Ascending aorta (tissue), 2 donors: ENCODE measurements at regions of chr3 and their contacts with region 1.

Region 1: DNA sequence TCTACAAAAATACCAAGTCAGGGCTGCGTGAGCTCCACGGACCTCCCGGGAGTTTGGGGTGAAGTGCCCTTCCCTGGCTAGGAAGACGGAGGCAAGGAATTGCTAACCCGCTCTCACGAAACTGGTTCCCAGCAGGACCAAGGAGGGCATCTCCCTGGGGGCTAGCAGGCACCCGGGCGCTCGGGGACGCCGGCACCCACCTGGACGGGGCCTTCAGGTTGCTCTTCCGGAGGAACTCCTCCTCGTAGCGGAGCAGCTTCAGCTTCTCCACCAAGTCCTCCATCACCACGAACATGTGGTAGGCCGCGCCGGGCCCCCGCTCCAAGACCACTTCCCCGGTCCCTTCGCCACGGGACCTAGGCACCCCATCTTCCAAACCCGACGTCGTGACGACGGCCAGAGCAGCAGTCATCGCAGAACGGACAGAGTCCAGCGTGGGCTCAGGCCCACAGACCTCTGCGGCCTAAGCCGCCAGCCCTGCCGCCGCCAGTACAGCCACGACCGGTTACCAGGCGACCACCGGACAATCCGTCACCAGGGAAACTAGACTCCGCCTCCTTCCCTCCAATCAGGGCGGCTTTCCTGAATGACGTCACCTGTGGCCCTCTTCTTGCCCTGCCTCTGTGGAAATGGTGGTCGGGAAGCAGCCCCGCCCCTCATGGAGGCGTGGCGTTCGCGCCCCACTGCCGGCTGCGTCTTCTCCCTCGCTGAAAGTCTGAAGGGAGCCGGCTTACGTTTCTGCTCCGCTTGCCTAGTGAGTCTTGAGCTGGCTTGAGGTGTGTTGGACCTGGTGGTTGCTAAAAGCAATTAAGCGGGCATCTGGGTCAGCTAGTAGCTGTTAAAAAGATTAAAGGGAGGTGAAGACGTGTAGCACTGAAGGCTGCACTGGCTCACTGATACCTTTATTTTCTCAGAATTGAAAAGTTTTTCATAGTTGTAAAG is at the start of gene IFT57:
- DNase-seq: peak; percentile 95 to 99
- H3K4me3 ChIP-seq: peak within 1 kb of the TSS; percentile 67 to 79
- H3K27ac ChIP-seq: peak within 1 kb of the TSS; percentile 68 to 69
- H3K4me1 ChIP-seq: peaks cover 0 to 19% of the 10 kb centered on the region in 2 donors
- H3K27me3 ChIP-seq: no peaks in the 10 kb centered on the region
- CTCF ChIP-seq: no peak
- total RNA-seq, gene IFT57: 27.7 TPM

Region 2: DNA sequence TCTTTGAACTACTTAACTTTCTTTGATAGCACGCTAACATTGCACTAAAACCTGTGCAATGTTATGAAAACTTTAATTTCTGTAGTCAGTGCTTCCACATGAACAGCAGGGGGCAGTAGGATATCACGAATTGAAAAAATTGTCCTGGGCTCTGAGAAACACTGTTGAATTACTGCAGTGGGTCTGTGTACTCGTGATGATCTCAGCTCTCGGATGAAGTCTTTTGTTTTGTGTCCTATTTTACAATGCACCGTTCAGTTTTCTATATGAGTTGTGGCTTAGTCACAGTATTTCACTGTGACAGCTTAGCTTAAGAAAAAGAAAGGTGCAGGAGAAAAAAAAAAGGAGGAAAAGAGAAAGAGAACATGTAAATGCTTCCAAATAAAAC is 986.3 kb before region 1 on chr3:
- intact Hi-C with region 1: loop called (anchors 10 kb)
- DNase-seq: no peak
- H3K4me3 ChIP-seq: peak overlapping the region; percentile 49 to 70
- H3K27ac ChIP-seq: peak overlapping the region; percentile 15 to 58
- H3K4me1 ChIP-seq: peaks cover 0 to 6% of the 10 kb centered on the region in 2 donors
- H3K27me3 ChIP-seq: no peaks in the 10 kb centered on the region
- CTCF ChIP-seq: peak; percentile 66 to 88 (median 85)

Region 3: DNA sequence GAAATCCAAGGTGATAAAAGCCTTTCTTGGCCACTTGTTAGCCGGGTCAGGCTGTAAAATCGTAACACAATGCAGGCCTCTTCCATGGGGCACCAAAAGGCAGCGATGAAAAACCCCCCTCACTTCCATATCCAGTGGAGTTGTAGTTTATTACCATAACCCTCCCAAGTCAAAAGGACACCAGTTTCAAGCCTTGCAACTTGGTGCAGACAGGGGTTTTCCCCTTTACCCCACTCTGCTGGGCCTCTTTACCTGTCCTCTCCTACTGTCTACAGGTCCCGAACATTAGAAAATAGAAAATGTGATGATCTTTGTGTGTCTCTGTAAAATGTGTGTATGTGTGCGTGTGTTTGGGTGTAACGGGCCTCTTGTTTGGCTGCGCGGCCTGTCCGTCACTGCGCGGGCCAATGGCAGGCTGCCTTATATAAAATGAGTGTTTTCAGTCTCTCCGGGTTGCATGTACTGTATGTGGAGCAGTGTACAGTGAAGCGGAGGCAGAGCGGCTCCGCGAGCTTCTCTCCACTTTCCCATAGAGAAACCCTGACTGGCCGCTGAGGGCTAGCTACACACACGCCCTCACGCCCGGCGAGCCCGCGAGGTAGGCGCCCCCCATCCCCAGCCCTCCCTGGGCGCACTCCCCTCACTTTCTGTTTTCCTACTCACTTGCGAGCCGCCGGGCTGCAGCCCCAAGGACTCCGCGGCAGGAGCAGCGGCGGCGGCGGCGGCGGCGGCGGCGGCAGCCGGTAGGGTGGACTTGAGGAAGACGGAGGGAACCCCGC is 699.5 kb before region 1 on chr3 and contains the start of gene BBX:
- intact Hi-C with region 1: loop called (anchors 5 kb)
- DNase-seq: peak; percentile 85 to 98
- H3K4me3 ChIP-seq: peak within 1 kb of the TSS; percentile 94 to 95
- H3K27ac ChIP-seq: peak within 1 kb of the TSS; percentile 96 to 98
- H3K4me1 ChIP-seq: peaks cover 0 to 11% of the 10 kb centered on the region in 2 donors
- H3K27me3 ChIP-seq: no peaks in the 10 kb centered on the region
- CTCF ChIP-seq: no peak
- total RNA-seq, gene BBX: 18.0 TPM

Region 4: DNA sequence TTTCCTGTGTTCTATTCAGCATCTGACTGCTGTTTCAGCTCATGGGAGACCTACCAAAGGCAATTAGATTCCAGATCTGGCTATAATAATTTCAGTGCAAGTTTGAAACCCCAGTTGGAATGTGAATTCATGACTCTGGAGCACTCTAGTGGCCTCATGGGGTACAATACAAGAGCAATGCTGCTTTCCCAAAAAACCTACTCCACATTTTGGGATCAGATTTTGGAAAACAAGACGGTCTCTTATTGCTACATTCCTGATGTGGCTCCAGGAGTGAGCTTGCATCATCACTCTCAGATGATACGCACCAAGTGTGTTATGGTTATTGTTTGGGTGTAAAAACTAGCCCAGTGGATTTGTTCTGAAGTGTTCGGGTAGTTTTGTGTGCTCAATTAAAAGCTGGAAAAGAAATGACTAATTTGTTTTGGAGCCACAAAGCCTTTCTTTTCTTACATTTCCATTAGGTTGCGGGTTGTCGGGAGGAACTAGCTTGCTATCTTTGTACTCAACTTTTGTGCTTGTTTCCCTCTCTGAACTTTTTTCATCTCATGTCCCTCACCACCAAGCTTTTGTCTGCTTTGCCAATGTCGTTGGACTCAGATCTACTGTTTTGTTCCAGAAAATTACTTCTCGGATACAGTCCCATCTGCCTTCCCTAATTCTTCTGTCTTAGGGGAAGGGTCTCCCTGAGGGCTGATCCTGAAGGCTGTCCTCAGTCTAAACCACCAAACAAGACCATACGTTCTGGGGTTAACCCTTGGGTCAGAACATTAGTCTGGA is 427.3 kb before region 1 on chr3:
- intact Hi-C with region 1: loop called (anchors 5 kb)
- DNase-seq: no peak
- H3K4me3 ChIP-seq: no peak overlapping the region
- H3K27ac ChIP-seq: peak overlapping the region; percentile 15 to 67
- H3K4me1 ChIP-seq: peaks cover 6 to 41% of the 10 kb centered on the region in 2 donors
- H3K27me3 ChIP-seq: no peaks in the 10 kb centered on the region
- CTCF ChIP-seq: peak in 2 of 3 experiments; percentile 30 to 36

Region 5: GRCh38 chr3:107956991-107957900 is 264.9 kb before region 1 on chr3:
- intact Hi-C with region 1: loop called (anchors 5 kb)
- DNase-seq: peak; percentile 26 to 93
- H3K4me3 ChIP-seq: peak overlapping the region; percentile 14 to 57
- H3K27ac ChIP-seq: peak overlapping the region; percentile 80 to 83
- H3K4me1 ChIP-seq: peaks cover 9 to 11% of the 10 kb centered on the region in 2 donors
- H3K27me3 ChIP-seq: no peaks in the 10 kb centered on the region
- CTCF ChIP-seq: no peak

Region 6: GRCh38 chr3:108589146-108589997 is 367.2 kb after region 1 on chr3 and contains the starts of genes CIP2A and DZIP3:
- intact Hi-C with region 1: loop called (anchors 10 kb)
- DNase-seq: peak; percentile 20 to 88
- H3K4me3 ChIP-seq: peak within 1 kb of the TSS; percentile 70 to 71
- H3K27ac ChIP-seq: peak within 1 kb of the TSS; percentile 93
- H3K4me1 ChIP-seq: peaks cover 0 to 2% of the 10 kb centered on the region in 2 donors
- H3K27me3 ChIP-seq: no peaks in the 10 kb centered on the region
- CTCF ChIP-seq: no peak
- total RNA-seq, gene CIP2A: not detected
- total RNA-seq, gene DZIP3: 7.0 TPM